ENCODE measurements at regions of chr5 and their contacts with region 1.

Region 1: GRCh38 chr5:96876292-96876850 is at the start of gene ERAP2:
- DNase-seq: peak in 1 of 7 donors; percentile 12
- H3K4me3 ChIP-seq: peak within 1 kb of the TSS; percentile 46 to 71 (median 66)
- H3K27ac ChIP-seq: peak within 1 kb of the TSS in 4 of 5 donors; percentile 45 to 81 (median 60)
- H3K4me1 ChIP-seq: peaks cover 0 to 22% of the 10 kb centered on the region in 2 donors
- H3K27me3 ChIP-seq: no peaks in the 10 kb centered on the region
- CTCF ChIP-seq: no peak
- POLR2A ChIP-seq: peak in 1 of 2 donors; percentile 9
- total RNA-seq, gene ERAP2: 2.6 to 32.1 (median 12.4) TPM

Region 2: DNA sequence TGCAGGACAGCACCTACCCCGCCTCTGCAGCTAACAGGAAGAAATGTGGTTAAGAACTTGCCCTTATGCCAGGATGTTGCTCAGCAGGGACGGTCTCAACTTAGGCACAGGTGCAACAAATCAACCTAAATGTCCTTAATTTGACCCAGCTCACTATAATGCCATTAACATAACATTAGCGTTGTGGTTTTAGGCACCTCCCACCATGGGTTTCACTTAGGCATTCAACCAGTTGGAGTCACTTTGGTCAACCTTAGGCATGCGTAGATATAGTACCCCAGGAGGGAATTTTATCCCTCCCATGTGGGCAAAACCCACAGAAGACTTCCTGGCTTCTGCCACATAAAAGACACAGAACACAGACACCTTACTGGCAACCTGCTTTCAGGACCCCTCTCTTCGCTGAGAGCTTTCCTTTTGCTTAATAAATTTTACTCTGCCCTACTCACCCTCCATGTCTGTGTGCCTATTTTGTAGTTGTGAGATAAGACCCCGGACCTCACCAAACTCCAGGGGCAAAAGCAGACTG is 59.9 kb before region 1 on chr5:
- intact Hi-C with region 1: loop called in 1 of 2 experiments (anchors 10 kb)
- DNase-seq: no peak
- H3K4me3 ChIP-seq: no peak overlapping the region
- H3K27ac ChIP-seq: no peak overlapping the region
- H3K4me1 ChIP-seq: peaks cover 0 to 3% of the 10 kb centered on the region in 2 donors
- H3K27me3 ChIP-seq: no peaks in the 10 kb centered on the region
- CTCF ChIP-seq: no peak
- POLR2A ChIP-seq: no peak

Region 3: GRCh38 chr5:96919754-96920197 is 43.4 kb after region 1 on chr5:
- intact Hi-C with region 1: loop called in 1 of 2 experiments (anchors 10 kb)
- DNase-seq: no peak
- H3K4me3 ChIP-seq: no peak overlapping the region
- H3K27ac ChIP-seq: no peak overlapping the region
- H3K4me1 ChIP-seq: no peaks in the 10 kb centered on the region
- H3K27me3 ChIP-seq: no peaks in the 10 kb centered on the region
- CTCF ChIP-seq: no peak
- POLR2A ChIP-seq: no peak

Region 4: DNA sequence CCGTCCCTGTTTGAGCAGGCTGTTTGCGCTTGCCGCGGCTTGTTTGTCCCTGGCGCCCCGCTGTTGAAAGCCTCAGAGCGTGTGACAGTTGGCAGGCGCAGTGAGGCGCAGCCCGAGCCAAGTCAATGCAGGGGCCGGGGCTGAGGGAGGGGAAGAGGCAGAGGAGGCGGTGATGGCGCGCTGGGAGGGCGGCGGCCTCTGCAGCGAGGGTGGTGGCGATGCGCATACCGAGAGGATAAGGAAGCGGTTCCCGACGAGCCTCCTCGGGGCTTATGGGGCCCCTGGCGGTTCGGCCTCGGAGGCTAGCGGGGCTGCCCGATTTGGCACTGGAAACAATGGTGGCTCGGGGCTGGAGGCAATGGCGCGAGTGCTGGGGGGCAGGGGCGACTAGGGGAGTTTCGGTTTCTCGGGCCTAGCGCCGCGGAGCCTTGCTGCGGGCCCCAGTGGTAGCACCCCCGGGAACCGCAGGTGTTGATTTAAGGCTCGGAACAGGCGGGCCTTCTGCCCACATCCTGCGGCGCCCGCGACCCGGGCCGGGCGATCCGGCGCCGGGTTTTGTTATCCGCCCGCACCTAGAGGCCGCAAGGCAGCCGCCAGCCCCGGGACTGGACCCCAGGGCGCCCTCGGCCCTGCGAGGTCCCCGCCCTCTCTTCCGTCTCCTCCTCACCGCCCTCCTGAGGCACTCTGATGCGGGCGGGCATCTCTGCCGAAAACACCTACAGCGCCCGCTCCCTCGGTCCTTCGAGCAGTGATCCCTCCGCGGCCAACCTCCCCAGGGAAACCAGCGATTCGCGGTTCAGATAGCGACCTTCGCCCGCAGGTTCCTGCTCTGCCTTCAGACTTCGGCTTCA is 58.6 kb after region 1 on chr5:
- intact Hi-C with region 1: loop called in 1 of 2 experiments (anchors 10 kb)
- DNase-seq: peak; percentile 88 to 95 (median 92)
- H3K4me3 ChIP-seq: peak overlapping the region; percentile 54 to 87 (median 66)
- H3K27ac ChIP-seq: peak overlapping the region; percentile 87 to 96 (median 91)
- H3K4me1 ChIP-seq: peaks cover 23 to 42% of the 10 kb centered on the region in 2 donors
- H3K27me3 ChIP-seq: no peaks in the 10 kb centered on the region
- CTCF ChIP-seq: peak in 2 of 6 experiments; percentile 23 to 47
- POLR2A ChIP-seq: peak; percentile 65 to 88

Region 5: GRCh38 chr5:97149709-97150108 is 273.3 kb after region 1 on chr5:
- intact Hi-C with region 1: loop called in 1 of 2 experiments (anchors 10 kb)
- DNase-seq: no peak
- H3K4me3 ChIP-seq: no peak overlapping the region
- H3K27ac ChIP-seq: no peak overlapping the region
- H3K4me1 ChIP-seq: no peaks in the 10 kb centered on the region
- H3K27me3 ChIP-seq: no peaks in the 10 kb centered on the region
- CTCF ChIP-seq: no peak
- POLR2A ChIP-seq: no peak

Measured in adrenal gland (tissue), 19 donors.